Activated B cell treated with CpG ODN at 0.5 μM for 24 hours (primary cell): ENCODE measurements at regions of chr11 and their contacts with region 1.

Region 1: GRCh38 chr11:58654079-58654907 is 31.8 kb downstream of the CNTF start:
- DNase-seq: peak; percentile 69
- ATAC-seq: peak; percentile 99
- H3K4me3 Mint-ChIP-seq: no peak overlapping the region
- H3K27ac Mint-ChIP-seq: no peak overlapping the region
- H3K4me1 Mint-ChIP-seq: peaks cover 5% of the 10 kb centered on the region
- H3K27me3 Mint-ChIP-seq: no peaks in the 10 kb centered on the region
- CTCF ChIP-seq: peak; percentile 25

Region 2: DNA sequence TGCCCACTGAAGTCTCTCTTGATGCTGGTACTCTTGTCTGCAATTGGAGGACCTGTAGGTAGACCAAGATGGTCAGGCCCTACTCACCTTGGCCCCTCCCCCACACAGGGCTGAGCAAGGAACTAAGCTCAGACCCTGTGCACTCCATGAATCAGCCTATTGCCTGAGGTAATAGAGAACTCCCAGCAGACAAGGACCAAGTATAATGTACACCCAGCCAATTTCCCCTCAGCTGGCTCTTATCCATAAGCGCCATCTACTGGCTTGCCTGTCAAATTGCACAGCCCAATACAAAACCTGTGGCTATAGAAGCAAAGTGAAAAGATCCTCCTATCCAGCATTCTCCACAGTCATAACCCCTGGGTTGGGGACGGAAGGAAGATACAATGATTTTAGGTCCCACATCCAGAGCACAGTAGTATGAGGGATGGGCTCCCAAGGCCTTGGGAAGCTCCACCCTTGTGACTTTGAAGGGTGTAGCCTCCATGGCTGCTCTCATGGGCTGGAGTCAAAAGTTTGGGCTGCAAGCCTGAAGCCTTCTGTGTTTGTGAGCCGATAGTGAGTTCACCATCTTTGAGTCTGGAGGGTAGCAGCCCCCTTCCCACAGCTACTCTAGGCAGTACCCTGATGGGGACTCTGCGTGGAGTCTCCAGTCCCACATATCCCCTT is 134.2 kb after region 1 on chr11:
- CTCF ChIA-PET with region 1: interaction called, 3 read pairs
- POLR2A ChIA-PET with region 1: no interaction called
- intact Hi-C with region 1: loop called (anchors 1 kb)
- DNase-seq: no peak
- ATAC-seq: peak; percentile 73
- H3K4me3 Mint-ChIP-seq: no peak overlapping the region
- H3K27ac Mint-ChIP-seq: no peak overlapping the region
- H3K4me1 Mint-ChIP-seq: no peaks in the 10 kb centered on the region
- H3K27me3 Mint-ChIP-seq: peaks cover 3% of the 10 kb centered on the region
- CTCF ChIP-seq: no peak

Region 3: DNA sequence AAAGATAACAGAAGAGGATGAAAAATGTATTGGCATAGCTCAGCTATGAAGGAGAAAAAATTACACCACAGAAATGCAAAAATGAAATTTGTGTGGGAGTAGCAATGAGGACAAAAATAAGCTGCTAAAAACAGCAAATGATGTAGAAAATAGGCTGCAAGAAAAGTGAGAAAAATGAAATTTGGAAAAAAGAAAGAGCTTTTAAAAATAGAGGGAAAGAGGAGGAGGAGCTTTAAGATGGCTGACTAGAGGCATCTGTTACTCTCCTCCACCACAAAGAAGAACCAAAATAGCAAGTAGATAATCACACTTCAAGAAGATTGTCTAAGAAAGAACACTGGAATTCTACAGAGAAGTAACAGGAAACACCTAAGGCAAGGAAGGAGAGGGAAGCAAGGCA is 680.7 kb after region 1 on chr11:
- CTCF ChIA-PET with region 1: no interaction called
- POLR2A ChIA-PET with region 1: no interaction called
- intact Hi-C with region 1: no loop called
- DNase-seq: no peak
- ATAC-seq: no peak
- H3K4me3 Mint-ChIP-seq: no peak overlapping the region
- H3K27ac Mint-ChIP-seq: no peak overlapping the region
- H3K4me1 Mint-ChIP-seq: no peaks in the 10 kb centered on the region
- H3K27me3 Mint-ChIP-seq: no peaks in the 10 kb centered on the region
- CTCF ChIP-seq: no peak

Region 4: GRCh38 chr11:59582006-59582405 is 927.7 kb after region 1 on chr11:
- CTCF ChIA-PET with region 1: no interaction called
- POLR2A ChIA-PET with region 1: no interaction called
- intact Hi-C with region 1: no loop called
- DNase-seq: no peak
- ATAC-seq: no peak
- H3K4me3 Mint-ChIP-seq: no peak overlapping the region
- H3K27ac Mint-ChIP-seq: peak overlapping the region; percentile 24
- H3K4me1 Mint-ChIP-seq: peaks cover 4% of the 10 kb centered on the region
- H3K27me3 Mint-ChIP-seq: no peaks in the 10 kb centered on the region
- CTCF ChIP-seq: no peak